ENCODE measurements at regions of chr15 and their contacts with region 1.

Region 1: DNA sequence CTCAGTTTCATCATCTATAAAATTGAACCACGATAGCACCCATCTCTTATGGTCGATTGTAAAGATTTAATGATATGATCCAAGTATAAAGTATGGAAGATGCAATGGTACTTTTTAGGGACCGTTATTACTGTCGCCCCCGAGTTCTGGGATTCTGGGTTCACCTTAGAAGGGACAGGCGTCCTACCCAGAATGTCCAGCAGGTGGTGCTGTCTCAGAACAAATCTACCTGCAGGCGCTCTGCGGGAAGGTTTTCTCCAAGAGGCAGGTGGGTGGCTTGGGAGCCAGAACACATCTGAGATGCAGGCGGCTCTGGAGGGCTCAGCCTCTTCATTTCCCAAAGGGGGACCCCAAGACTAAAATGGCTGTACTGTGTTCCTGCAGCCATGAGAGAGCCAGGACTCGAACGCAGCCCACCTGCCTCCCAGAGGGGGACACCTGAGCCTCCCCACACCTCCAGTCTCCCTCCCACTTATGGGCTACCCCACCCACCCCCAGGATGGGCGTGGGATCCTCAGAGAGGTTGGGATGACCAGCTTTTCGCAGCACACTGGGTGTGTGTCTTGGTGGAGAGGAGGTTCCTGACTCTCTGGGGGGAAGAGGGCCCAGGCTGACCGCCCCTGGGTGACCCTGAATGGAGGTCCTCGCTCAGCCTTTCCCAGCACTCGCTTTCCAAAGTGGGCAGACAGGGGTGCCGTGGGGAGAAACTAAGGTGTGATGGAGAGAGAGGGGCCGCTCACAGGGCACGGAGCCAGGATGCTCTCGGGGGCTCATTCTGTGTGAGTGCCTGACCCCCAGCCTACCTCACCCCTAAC is 28.1 kb upstream of the CORO2B start:
- DNase-seq: no peak
- H3K4me3 ChIP-seq: no peak overlapping the region
- H3K27ac ChIP-seq: no peak overlapping the region
- H3K27me3 ChIP-seq: peaks cover 8% of the 10 kb centered on the region
- CTCF ChIP-seq: peak; percentile 90

Region 2: DNA sequence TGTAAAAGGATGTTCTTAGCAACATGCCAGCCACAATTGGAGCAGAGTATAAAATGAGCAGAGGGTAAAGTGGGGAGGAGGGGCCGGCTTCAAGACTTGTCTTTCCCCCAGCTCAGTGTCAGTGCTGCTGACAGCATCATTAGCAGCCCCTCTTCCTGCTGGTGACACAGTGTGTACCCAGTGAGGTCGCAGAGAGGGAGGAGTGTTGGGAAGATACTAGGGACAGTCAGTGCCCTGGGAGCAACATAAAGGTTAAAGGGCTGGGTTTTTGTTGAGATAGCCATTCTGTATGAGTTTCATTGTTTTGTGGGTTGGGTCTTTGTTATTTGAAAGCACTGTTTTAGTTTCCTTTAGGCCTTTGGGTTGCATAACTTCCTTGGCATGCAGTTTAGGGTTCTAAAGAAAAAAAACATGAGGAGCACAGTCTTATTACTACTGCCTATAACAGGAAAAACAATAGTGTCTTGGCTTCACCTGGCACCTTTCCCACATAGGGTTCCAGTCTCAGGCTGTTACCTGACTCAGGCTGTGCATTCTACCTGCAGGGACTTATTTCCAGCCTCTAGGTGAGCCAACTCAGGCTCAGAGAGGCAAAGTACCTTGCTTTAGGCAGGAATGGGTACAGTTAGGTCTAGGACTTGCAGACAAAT is 819.5 kb before region 1 on chr15:
- CTCF ChIA-PET with region 1: no interaction called
- POLR2A ChIA-PET with region 1: no interaction called
- DNase-seq: no peak
- H3K4me3 ChIP-seq: no peak overlapping the region
- H3K27ac ChIP-seq: no peak overlapping the region
- H3K27me3 ChIP-seq: no peaks in the 10 kb centered on the region
- CTCF ChIP-seq: no peak

Region 3: GRCh38 chr15:68304589-68305337 is 245.9 kb before region 1 on chr15:
- CTCF ChIA-PET with region 1: interaction called, 99 read pairs
- POLR2A ChIA-PET with region 1: no interaction called
- DNase-seq: no peak
- H3K4me3 ChIP-seq: no peak overlapping the region
- H3K27ac ChIP-seq: no peak overlapping the region
- H3K27me3 ChIP-seq: no peaks in the 10 kb centered on the region
- CTCF ChIP-seq: no peak

Region 4: DNA sequence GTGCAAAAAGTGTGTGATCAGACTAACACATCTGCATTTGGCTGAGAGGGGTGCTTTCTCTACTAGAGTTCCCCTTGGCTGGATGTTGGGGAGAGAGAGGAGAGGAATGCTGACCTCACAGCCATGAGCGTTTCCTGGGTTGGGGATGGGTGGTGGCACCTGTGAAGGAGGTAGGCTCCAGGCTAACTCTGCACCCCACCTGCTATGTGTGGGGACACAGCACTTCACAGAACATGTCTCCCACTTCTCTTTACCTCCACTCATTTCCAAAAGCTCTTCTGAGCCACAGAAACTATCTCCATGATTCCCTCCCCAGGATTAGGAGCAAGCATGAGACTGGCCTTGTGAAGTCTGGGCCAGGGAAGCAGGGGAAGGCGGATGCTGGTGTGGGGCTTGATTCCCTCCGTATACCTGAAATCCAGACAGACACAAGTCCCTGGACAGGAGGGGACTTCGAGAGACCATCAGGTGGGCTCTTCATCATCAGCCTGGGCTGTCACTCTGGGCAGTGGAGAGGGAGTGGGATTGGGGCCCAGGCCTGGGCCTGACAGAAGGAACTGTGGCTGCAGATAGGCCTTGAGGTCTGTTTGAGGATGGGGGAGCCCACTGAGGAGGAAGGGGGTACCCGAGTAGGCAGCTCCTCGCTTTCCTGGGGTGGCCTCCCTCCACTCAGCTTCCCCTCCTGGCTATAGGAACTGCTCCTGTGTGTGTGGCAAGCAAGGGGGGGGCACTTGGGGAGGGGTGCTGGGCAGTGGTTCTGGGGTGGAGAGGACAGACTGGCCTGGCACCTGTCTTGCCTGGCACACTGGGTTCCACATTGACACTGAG is 232.5 kb before region 1 on chr15:
- CTCF ChIA-PET with region 1: no interaction called
- POLR2A ChIA-PET with region 1: no interaction called
- DNase-seq: no peak
- H3K4me3 ChIP-seq: no peak overlapping the region
- H3K27ac ChIP-seq: no peak overlapping the region
- H3K27me3 ChIP-seq: no peaks in the 10 kb centered on the region
- CTCF ChIP-seq: no peak

Region 5: GRCh38 chr15:68526269-68526668 is 24.4 kb before region 1 on chr15:
- CTCF ChIA-PET with region 1: interaction called, 23 read pairs
- POLR2A ChIA-PET with region 1: no interaction called
- DNase-seq: no peak
- H3K4me3 ChIP-seq: no peak overlapping the region
- H3K27ac ChIP-seq: no peak overlapping the region
- H3K27me3 ChIP-seq: no peaks in the 10 kb centered on the region
- CTCF ChIP-seq: no peak

Region 6: DNA sequence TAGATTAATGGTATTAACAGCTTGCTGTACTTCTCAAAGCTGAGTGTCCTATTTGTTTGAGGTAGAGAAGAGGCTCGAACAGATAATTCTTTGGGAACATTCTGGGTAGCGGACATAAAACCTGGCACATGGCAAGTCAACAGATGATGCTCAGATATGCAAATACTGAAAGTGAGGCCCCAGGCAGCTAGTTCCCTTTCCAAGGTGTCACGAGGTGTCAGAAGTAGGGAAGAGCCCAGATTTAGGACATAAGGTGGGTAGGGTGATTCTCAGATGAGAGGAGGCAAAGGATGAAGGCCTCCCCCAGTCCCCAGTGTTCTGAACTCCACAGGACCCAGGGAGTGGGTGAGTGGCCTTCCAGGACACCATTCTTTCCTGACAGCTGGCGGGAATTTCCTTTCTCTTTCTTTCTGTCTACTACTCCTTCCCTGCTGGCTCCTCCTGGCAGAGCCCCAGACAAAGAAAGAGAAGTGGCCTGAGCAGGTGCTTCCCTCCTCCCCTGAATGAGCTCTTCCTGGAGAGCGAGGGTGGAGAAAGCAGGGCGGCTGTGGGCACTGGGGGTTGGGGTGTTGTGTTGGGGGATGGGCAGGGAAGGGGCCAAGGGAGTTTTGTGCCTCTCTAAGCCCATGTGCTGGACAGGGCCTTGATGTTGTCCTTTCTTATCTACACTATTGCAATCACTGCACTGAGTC is 115.6 kb after region 1 on chr15:
- CTCF ChIA-PET with region 1: interaction called, 138 read pairs
- POLR2A ChIA-PET with region 1: no interaction called
- DNase-seq: no peak
- H3K4me3 ChIP-seq: no peak overlapping the region
- H3K27ac ChIP-seq: no peak overlapping the region
- H3K27me3 ChIP-seq: no peaks in the 10 kb centered on the region
- CTCF ChIP-seq: no peak

Region 7: GRCh38 chr15:68783226-68784058 is 232.8 kb after region 1 on chr15:
- CTCF ChIA-PET with region 1: no interaction called
- POLR2A ChIA-PET with region 1: no interaction called
- DNase-seq: no peak
- H3K4me3 ChIP-seq: no peak overlapping the region
- H3K27ac ChIP-seq: no peak overlapping the region
- H3K27me3 ChIP-seq: no peaks in the 10 kb centered on the region
- CTCF ChIP-seq: peak; percentile 56

Region 8: GRCh38 chr15:68924866-68925560 is 374.3 kb after region 1 on chr15:
- CTCF ChIA-PET with region 1: interaction called, 13 read pairs
- POLR2A ChIA-PET with region 1: no interaction called
- DNase-seq: peak; percentile 29
- H3K4me3 ChIP-seq: no peak overlapping the region
- H3K27ac ChIP-seq: no peak overlapping the region
- H3K27me3 ChIP-seq: peaks cover 9% of the 10 kb centered on the region
- CTCF ChIP-seq: peak; percentile 94